PC-3 (cell line): ENCODE measurements at regions of chr13 and their contacts with region 1.

Region 1: GRCh38 chr13:109344552-109345157 is 441.7 kb downstream of the IRS2 start:
- DNase-seq: peak; percentile 55
- ATAC-seq: peak; percentile 66
- H3K4me3 ChIP-seq: no peak overlapping the region
- H3K27ac ChIP-seq: no peak overlapping the region
- H3K4me1 ChIP-seq: peaks cover 34% of the 10 kb centered on the region
- H3K27me3 ChIP-seq: no peaks in the 10 kb centered on the region
- CTCF ChIP-seq: no peak

Region 2: DNA sequence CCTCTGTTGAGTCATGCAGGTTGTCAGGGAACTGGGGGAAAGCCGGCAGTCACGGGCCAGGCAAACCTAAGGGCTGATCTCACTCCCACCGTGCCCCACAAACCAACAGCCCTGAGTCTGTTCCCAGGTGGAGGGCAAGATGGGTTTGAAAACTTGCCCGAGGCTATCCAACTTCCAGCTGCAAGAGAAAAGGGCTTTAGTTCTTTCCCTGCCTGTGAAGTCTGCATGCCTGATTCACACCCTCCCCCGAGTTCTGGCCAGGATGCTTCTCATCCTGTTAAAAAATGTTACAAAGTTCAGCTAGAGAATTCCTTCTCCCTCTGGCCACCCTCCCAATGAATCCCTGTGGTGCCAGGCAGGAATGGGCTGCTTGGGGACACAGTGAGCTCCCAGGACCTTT is 682.1 kb before region 1 on chr13:
- CTCF ChIA-PET with region 1: no interaction called
- POLR2A ChIA-PET with region 1: no interaction called
- intact Hi-C with region 1: no loop called
- DNase-seq: peak; percentile 41
- ATAC-seq: no peak
- H3K4me3 ChIP-seq: no peak overlapping the region
- H3K27ac ChIP-seq: peak overlapping the region; percentile 43
- H3K4me1 ChIP-seq: no peaks in the 10 kb centered on the region
- H3K27me3 ChIP-seq: no peaks in the 10 kb centered on the region
- CTCF ChIP-seq: no peak

Region 3: DNA sequence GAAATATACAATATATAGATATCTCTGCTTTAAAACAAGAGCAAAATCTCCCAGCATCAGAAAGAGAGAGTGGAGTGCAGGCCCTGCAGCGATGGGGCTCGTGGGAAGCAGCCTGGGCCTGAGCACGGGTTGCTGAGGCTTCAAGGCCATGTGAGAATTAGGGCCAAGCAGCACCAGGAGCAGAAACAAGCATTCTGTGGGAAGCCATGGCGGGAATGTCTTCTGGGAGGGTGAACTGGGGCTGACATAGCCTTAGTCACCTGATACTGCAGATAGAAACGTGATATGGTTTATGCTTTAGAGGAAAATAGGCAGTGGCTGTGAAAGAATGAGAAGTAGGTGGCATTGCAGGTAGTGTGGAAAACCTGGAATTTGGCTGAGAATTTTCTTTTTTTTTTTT is 30.6 kb before region 1 on chr13:
- CTCF ChIA-PET with region 1: no interaction called
- POLR2A ChIA-PET with region 1: no interaction called
- intact Hi-C with region 1: no loop called
- DNase-seq: no peak
- ATAC-seq: no peak
- H3K4me3 ChIP-seq: no peak overlapping the region
- H3K27ac ChIP-seq: no peak overlapping the region
- H3K4me1 ChIP-seq: no peaks in the 10 kb centered on the region
- H3K27me3 ChIP-seq: no peaks in the 10 kb centered on the region
- CTCF ChIP-seq: no peak

Region 4: GRCh38 chr13:109541081-109541480 is 196.4 kb after region 1 on chr13:
- CTCF ChIA-PET with region 1: no interaction called
- POLR2A ChIA-PET with region 1: no interaction called
- intact Hi-C with region 1: no loop called
- DNase-seq: no peak
- ATAC-seq: no peak
- H3K4me3 ChIP-seq: no peak overlapping the region
- H3K27ac ChIP-seq: no peak overlapping the region
- H3K4me1 ChIP-seq: no peaks in the 10 kb centered on the region
- H3K27me3 ChIP-seq: no peaks in the 10 kb centered on the region
- CTCF ChIP-seq: no peak

Region 5: DNA sequence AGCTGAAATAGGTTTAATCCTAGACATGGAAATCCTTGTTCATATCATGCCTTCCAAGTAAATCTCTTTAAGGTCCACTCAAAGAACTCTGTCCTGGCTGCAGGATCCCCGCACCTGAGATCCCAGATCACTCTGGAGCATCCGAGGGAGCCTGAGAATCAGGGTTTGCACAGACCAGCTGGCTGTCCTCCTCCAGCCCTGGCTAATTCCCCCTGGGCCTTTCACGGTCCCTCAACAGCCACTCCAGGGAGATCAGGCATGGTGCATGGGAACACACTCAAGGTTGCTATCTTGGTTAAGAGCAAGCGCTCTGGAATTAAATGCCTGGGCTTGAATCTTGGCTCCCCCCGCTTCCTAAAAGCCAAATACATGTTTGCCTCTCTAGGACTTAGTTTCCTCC is 311.0 kb after region 1 on chr13:
- CTCF ChIA-PET with region 1: no interaction called
- POLR2A ChIA-PET with region 1: no interaction called
- intact Hi-C with region 1: no loop called
- DNase-seq: no peak
- ATAC-seq: no peak
- H3K4me3 ChIP-seq: no peak overlapping the region
- H3K27ac ChIP-seq: no peak overlapping the region
- H3K4me1 ChIP-seq: no peaks in the 10 kb centered on the region
- H3K27me3 ChIP-seq: no peaks in the 10 kb centered on the region
- CTCF ChIP-seq: no peak

Region 6: GRCh38 chr13:109778102-109778542 is 433.5 kb after region 1 on chr13:
- CTCF ChIA-PET with region 1: no interaction called
- POLR2A ChIA-PET with region 1: no interaction called
- intact Hi-C with region 1: loop called (anchors 10 kb)
- DNase-seq: peak; percentile 56
- ATAC-seq: peak; percentile 39
- H3K4me3 ChIP-seq: peak overlapping the region; percentile 57
- H3K27ac ChIP-seq: peak overlapping the region; percentile 34
- H3K4me1 ChIP-seq: peaks cover 54% of the 10 kb centered on the region
- H3K27me3 ChIP-seq: no peaks in the 10 kb centered on the region
- CTCF ChIP-seq: no peak

Region 7: DNA sequence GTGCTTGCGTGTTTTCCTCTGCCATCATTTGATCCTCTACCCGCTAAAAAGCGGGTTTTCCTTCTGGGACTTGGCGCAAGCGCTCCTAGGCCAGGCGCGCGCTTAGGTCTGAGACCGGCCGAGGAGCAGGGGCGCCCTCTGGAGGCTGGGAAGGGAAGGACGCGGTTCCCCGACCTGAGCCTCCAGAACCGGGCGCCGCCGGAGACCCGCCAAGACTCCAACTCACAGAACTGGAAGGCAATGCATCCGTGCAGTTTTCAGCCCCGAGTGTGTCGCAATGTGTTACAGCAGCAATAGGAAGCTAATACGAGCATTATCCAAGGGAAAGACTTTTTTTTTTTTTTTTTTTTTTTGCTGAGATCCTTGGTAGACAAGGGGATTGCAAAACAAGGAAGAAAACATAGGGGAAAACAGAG is 771.4 kb after region 1 on chr13:
- CTCF ChIA-PET with region 1: no interaction called
- POLR2A ChIA-PET with region 1: no interaction called
- intact Hi-C with region 1: loop called (anchors 10 kb)
- DNase-seq: peak; percentile 76
- ATAC-seq: peak; percentile 50; the same call in 1 of the 2 replicates
- H3K4me3 ChIP-seq: no peak overlapping the region
- H3K27ac ChIP-seq: no peak overlapping the region
- H3K4me1 ChIP-seq: peaks cover 38% of the 10 kb centered on the region
- H3K27me3 ChIP-seq: no peaks in the 10 kb centered on the region
- CTCF ChIP-seq: peak; percentile 85